GM10248 (cell line): ENCODE measurements at regions of chr3 and their contacts with region 1.

Region 1: GRCh38 chr3:94069194-94069813 is 6.4 kb downstream of the NSUN3 start:
- DNase-seq: no peak
- CTCF ChIP-seq: peak; percentile 45

Region 2: DNA sequence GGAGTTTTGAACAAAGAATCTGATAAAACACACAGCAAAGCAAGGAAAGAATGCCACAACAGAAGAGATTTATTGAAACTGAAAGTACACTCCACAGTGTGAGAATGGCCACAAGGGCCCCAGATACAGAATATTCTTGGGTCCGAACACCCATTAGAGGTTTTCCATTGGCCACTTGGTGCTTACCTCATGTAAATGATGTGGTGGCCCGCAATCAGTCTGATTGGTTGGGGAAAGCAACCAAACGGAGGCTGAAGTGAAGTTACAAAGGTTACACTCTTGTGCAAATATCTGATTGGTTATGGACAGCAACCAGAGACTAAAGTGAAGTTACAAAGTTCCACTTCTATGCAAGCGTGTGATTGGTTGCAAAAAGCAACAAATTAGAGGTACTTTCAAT is 14.0 kb after region 1 on chr3:
- CTCF ChIA-PET with region 1: interaction called, 45 read pairs
- POLR2A ChIA-PET with region 1: no interaction called
- DNase-seq: no peak
- CTCF ChIP-seq: no peak